ENCODE measurements at regions of chr10 and their contacts with region 1.

Region 1: DNA sequence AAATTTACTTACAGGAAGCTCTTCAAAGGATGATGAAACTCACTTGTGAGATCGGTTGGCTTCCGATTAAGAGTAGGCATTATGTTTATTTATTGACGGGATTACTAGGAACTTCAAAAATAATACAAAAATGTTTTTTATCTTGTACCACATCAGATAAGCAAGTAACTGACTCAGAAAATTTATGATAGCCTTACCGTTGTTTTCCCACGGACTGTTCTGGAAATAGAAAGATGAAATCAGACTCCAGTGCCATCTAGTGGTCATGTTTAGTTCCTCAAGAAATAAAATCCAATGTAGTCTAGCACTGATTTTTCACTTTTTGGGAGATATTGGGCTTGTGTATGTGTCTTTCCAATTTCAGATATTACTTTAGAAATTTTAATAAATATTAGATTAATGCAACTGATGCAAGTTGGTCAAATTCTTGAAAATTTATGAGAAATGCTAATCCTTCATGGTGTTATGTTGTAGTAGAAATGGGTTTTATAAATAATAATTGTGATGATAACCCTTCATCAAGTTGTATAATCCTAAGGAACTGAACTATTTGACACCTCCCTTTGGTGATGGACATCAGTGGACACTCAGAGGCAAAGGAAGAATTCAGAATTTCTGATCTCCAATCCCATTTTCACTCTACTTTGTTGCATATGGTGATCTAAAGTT is 168.8 kb downstream of the TMEM26 start:
- DNase-seq: no peak
- ATAC-seq: no peak
- H3K4me3 Mint-ChIP-seq: peak overlapping the region; percentile 35
- H3K27ac Mint-ChIP-seq: no peak overlapping the region
- H3K4me1 Mint-ChIP-seq: peaks cover 15% of the 10 kb centered on the region
- H3K27me3 Mint-ChIP-seq: no peaks in the 10 kb centered on the region

Region 2: DNA sequence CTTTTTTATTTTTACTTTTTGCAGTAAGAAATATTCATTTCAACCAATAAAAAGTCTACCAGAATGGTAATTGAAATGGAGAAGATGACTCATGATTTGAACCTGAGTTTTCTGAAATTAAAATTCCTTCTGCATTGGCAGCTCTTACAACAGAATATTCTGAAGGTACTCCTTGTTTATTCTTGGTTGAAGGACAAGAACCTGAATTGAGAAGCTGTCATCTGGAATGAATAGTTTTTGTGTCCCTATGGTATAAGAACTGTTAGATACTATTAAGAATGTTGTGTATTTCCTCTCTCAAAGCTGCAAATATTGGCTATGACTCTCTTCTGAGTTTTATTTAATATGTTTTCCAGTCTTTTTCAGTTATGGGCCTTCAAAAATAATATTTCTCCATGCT is 450.0 kb before region 1 on chr10:
- CTCF ChIA-PET with region 1: no interaction called
- POLR2A ChIA-PET with region 1: no interaction called
- intact Hi-C with region 1: loop called in 1 of 2 experiments (anchors 5 kb)
- DNase-seq: no peak
- ATAC-seq: no peak
- H3K4me3 Mint-ChIP-seq: no peak overlapping the region
- H3K27ac Mint-ChIP-seq: no peak overlapping the region
- H3K4me1 Mint-ChIP-seq: no peaks in the 10 kb centered on the region
- H3K27me3 Mint-ChIP-seq: peaks cover 3% of the 10 kb centered on the region

Region 3: DNA sequence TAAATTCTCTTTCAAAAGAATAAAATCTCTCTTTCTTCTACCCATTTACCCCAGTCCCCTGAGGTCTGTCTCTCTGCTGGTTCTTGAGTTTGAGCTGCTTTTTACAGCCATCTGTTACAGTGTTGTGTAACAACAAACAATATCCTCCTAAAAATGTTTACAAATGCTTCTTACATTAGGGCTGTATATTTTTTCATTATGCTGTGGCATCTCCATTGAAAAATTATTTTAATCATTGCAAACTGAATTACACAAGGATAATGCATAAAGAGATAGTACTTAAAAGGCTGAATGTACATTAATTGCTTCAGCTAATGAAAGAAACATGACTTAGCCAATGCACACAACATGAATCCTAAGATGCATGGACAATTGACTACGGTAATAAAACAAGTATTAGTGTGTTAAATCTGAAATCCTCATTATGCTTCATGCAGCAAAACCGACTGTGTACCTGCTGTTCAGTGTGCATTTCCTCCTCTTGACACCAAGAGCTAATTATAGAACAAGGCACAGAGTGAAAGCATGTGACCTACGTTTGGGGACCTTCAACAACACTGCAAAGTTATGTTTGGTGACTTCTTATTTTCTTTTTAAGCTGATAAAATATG is 158.7 kb before region 1 on chr10:
- CTCF ChIA-PET with region 1: no interaction called
- POLR2A ChIA-PET with region 1: no interaction called
- intact Hi-C with region 1: no loop called
- DNase-seq: no peak
- ATAC-seq: no peak
- H3K4me3 Mint-ChIP-seq: no peak overlapping the region
- H3K27ac Mint-ChIP-seq: no peak overlapping the region
- H3K4me1 Mint-ChIP-seq: peaks cover 9% of the 10 kb centered on the region
- H3K27me3 Mint-ChIP-seq: peaks cover 4% of the 10 kb centered on the region

Region 4: DNA sequence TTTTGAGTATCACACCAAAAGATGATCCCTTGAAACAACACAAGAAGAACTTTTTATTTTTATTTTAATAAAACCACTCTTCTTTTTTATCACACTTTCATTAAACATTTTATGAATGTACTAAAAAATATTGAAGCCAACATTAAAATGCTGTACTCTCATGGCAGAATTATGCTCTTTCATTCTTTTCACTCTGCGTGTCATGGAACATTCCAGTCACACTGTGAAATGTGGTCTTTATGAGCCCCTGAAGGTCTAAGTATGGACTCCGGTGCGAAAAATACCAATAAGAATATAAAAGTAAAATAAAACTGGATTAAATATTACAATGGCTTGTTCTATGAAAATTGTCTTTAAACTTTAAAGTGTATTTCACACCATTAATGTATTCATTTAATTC is 20.4 kb after region 1 on chr10:
- CTCF ChIA-PET with region 1: no interaction called
- POLR2A ChIA-PET with region 1: no interaction called
- intact Hi-C with region 1: no loop called
- DNase-seq: no peak
- ATAC-seq: no peak
- H3K4me3 Mint-ChIP-seq: no peak overlapping the region
- H3K27ac Mint-ChIP-seq: no peak overlapping the region
- H3K4me1 Mint-ChIP-seq: no peaks in the 10 kb centered on the region
- H3K27me3 Mint-ChIP-seq: no peaks in the 10 kb centered on the region

Measured in activated CD4-positive, alpha-beta T cell treated with anti-CD3 and anti-CD28 coated beads for 36 hours (primary cell).